Naive thymus-derived CD4-positive, alpha-beta T cell (primary cell): ENCODE measurements at regions of chr20 and their contacts with region 1.

Region 1: DNA sequence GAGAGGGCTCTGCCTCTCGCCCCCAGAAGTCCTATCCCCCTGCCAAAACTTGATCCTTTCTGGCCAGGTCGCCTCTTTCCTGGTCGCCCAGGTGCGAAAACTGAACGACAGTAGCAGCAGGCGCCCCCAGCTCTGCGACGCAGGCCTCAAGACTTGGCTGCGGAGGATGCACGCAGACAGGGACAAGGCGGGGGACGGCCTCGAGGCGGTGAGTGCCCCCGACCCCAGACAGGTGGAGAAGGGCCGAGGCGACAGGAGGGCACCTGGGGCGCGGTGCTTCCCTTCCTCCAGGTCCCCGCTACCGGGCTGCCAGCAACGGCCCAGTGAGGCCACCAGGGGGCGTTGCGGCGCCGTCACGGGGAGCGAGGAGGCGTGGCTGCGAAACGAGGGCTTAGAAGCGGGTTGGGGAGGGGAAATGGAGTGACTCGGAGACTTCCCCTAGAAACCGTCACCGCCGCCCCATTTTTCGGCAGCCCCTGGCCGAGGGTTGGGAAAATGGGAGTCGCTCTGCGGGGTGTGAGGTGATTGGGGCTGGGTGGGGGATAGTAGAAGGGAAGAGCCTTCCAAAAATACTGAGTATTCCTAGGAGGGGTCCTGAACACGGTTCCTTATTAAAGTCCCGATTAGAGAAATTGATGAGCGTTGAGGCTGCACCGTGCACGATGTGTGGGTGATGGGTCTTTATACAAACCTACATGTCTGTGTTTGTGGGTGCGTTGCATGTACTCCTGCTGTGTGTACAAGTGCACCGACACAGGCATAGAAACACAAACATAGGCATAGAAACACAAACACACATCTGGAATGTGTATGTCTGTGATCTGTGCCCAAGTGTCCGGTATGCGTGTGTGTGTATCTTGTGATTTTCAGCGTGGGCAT is 44.6 kb downstream of the ARHGAP40 start:
- DNase-seq: peak; percentile 80 to 97 (median 90)
- ATAC-seq: peak; percentile 99
- H3K4me3 ChIP-seq: peak overlapping the region; percentile 46
- H3K4me3 Mint-ChIP-seq: peak overlapping the region; percentile 74 to 91 (median 84)
- H3K27ac ChIP-seq: no peak overlapping the region
- H3K27ac Mint-ChIP-seq: peak overlapping the region in 3 of 9 donors; percentile 10 to 46 (median 31)
- H3K4me1 ChIP-seq: peaks cover 7 to 8% of the 10 kb centered on the region in 2 donors
- H3K4me1 Mint-ChIP-seq: peaks cover 0 to 8% (median 8%) of the 10 kb centered on the region in 7 donors
- H3K27me3 ChIP-seq: no peaks in the 10 kb centered on the region
- H3K27me3 Mint-ChIP-seq: peaks cover 24 to 49% (median 34%) of the 10 kb centered on the region in 5 donors

Region 2: DNA sequence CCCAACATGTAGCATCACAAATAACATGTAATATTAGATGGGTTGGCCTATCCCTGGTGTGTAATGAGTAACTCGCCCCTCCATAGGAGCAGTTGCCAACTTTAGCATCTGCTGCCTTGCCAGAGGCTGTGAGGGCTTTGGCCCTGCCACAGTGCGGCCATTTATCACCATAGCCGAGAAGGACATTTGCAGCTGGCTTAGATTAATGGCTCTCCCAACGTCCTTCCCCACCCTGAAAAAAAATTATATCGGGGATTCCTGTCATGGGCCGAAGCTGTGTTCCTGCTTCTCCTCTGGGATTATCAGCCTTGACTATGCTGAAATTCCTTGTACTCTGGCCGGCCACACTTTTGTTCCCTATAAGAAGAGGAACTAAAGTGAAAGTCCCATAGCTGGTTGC is 72.8 kb before region 1 on chr20:
- CTCF ChIA-PET with region 1: no interaction called
- POLR2A ChIA-PET with region 1: no interaction called
- intact Hi-C with region 1: no loop called
- DNase-seq: no peak
- ATAC-seq: no peak
- H3K4me3 ChIP-seq: no peak overlapping the region
- H3K4me3 Mint-ChIP-seq: no peak overlapping the region
- H3K27ac ChIP-seq: no peak overlapping the region
- H3K27ac Mint-ChIP-seq: no peak overlapping the region
- H3K4me1 ChIP-seq: no peaks in the 10 kb centered on the region
- H3K4me1 Mint-ChIP-seq: no peaks in the 10 kb centered on the region
- H3K27me3 ChIP-seq: no peaks in the 10 kb centered on the region
- H3K27me3 Mint-ChIP-seq: no peaks in the 10 kb centered on the region

Region 3: GRCh38 chr20:38658879-38659596 is 12.8 kb after region 1 on chr20:
- CTCF ChIA-PET with region 1: interaction called, 10 read pairs
- POLR2A ChIA-PET with region 1: no interaction called
- intact Hi-C with region 1: no loop called
- DNase-seq: peak in 3 of 9 donors; percentile 17 to 23 (median 22)
- ATAC-seq: peak; percentile 67
- H3K4me3 ChIP-seq: no peak overlapping the region
- H3K4me3 Mint-ChIP-seq: no peak overlapping the region
- H3K27ac ChIP-seq: no peak overlapping the region
- H3K27ac Mint-ChIP-seq: no peak overlapping the region
- H3K4me1 ChIP-seq: no peaks in the 10 kb centered on the region
- H3K4me1 Mint-ChIP-seq: no peaks in the 10 kb centered on the region
- H3K27me3 ChIP-seq: peaks cover 0 to 10% of the 10 kb centered on the region in 2 donors
- H3K27me3 Mint-ChIP-seq: peaks cover 32 to 52% (median 41%) of the 10 kb centered on the region in 5 donors

Region 4: DNA sequence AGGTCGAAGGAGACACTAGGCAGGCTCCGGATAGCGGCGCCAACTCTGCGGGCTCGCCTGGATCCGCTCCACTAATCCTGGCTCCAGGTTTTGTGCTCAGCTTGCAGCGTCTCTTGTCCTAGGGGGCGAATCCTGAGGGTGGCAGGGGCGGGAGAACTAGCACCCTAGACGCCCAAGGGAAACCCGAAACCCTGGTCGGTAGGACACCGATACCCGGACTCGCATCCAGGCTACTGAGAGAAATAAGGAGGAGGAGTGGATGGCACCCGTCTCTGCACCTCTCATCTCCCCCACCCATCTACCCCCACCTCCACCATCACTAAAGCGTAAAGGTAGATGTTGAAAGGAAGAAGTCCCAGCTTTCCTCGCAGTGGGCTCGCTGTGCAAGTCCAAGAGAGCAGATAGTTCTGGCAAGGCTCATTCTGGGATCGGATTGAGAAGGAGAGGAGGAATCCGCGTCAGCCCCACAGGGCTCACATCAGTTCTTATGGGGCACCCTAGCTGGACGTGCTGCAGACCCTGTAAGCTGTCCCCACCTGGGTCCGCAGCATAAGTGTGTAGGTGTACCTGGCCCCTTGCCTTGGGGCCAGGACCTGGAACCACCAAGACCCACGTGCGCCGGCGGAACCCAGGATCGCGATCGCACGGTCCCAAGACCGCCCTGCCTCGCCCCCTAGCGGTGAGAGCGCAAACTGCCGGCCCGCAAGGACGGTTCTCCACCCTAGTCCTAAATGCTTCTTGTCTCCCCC is 84.9 kb after region 1 on chr20:
- CTCF ChIA-PET with region 1: no interaction called
- POLR2A ChIA-PET with region 1: no interaction called
- intact Hi-C with region 1: loop called (anchors 1 to 5 kb)
- DNase-seq: peak; percentile 53 to 84 (median 70)
- ATAC-seq: peak; percentile 87
- H3K4me3 ChIP-seq: peak overlapping the region; percentile 63
- H3K4me3 Mint-ChIP-seq: peak overlapping the region; percentile 65 to 86 (median 77)
- H3K27ac ChIP-seq: no peak overlapping the region
- H3K27ac Mint-ChIP-seq: peak overlapping the region in 6 of 9 donors; percentile 6 to 80 (median 44)
- H3K4me1 ChIP-seq: peaks cover 24 to 32% of the 10 kb centered on the region in 2 donors
- H3K4me1 Mint-ChIP-seq: peaks cover 32 to 52% (median 44%) of the 10 kb centered on the region in 7 donors
- H3K27me3 ChIP-seq: peaks cover 39 to 41% of the 10 kb centered on the region in 2 donors
- H3K27me3 Mint-ChIP-seq: peaks cover 89 to 96% (median 92%) of the 10 kb centered on the region in 5 donors

Region 5: DNA sequence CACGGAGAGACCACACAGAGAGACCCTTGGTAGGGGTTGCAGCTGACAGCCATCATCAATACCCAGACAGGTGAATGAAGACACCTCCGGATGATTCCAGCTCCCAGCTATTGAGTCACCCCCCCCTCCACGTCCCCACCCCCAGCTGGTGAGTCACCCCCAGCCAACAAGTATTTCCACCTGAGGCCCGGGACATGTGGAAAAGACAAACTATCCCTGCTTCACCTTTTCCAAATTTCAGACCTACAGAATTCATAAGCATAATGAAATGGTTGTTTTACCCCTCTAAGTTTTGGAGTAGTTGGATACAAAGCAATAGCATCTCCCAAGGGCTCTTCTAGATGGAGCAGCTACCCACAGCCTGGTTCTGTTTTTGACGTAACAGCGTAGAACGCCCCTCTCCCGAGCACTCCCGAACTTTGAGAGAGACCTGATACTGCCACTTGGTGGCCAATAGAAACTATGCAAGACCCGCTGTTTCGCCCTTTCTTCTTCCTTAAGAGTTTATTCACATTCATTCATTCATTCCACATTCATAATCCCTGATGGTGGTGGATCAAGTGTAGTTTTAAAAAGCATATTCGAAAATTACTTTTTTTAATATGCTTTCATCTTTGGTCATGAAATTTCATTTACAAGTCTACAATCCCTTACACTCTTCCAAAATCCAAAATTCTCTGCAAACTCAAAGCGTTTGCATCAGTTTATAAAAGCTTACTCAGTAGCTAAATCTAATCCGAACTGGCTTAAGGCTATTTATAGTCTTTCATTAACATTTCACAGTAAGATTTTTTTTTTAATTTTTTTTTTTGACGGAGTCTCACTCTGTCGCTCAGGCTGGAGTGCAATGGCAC is 144.2 kb after region 1 on chr20:
- CTCF ChIA-PET with region 1: no interaction called
- POLR2A ChIA-PET with region 1: no interaction called
- intact Hi-C with region 1: loop called in 1 of 2 experiments (anchors 1 kb)
- DNase-seq: peak in 4 of 9 donors; percentile 20 to 63 (median 40)
- ATAC-seq: peak; percentile 60
- H3K4me3 ChIP-seq: no peak overlapping the region
- H3K4me3 Mint-ChIP-seq: peak overlapping the region in 5 of 10 donors; percentile 5 to 37 (median 15)
- H3K27ac ChIP-seq: no peak overlapping the region
- H3K27ac Mint-ChIP-seq: peak overlapping the region in 6 of 9 donors; percentile 2 to 90 (median 64)
- H3K4me1 ChIP-seq: peaks cover 0 to 4% of the 10 kb centered on the region in 2 donors
- H3K4me1 Mint-ChIP-seq: peaks cover 0 to 15% (median 9%) of the 10 kb centered on the region in 7 donors
- H3K27me3 ChIP-seq: no peaks in the 10 kb centered on the region
- H3K27me3 Mint-ChIP-seq: no peaks in the 10 kb centered on the region

Region 6: DNA sequence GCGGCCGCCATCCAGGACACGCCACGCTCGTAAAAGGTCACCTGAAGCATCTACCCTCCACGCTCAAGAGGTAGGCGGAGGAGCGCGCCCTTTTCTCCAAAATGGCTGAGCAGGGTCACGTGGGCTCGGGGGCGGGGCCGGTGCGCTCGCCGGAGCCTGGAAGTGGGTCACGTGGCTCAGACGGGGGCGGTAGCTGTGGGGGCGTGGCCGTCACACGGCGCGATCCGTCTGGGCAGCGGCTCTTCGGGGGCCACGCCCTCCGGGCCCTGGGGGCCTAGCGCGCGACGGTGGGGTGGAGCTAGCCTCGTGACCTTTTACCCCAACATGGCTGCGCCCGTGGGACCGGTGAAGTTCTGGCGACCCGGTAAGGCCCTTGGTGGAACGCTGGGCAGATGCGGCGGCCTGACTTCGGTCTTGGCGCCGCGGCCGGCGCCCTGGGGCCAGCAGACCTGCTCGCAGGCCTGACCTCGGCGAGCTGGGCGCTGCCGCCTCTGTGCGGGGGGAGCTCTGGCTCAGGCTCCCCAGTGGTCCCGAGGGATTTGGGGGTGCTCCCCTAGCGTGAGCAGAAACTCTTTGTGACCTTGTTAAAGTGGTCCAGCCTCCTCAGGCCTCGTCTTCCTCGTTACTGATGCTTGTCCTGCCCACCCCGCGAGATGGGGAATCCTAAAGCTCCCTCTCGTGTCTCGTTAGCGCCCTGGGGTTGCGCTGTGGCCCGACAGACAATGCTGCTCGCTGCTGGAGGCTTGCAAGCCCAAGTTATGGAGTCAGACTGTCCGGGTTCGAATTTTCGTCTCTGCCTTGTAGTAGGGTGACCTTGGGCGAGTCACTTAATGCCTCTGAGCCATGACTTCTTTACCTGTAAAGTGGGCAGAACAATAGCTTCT is 316.1 kb after region 1 on chr20 and contains the start of gene DHX35:
- CTCF ChIA-PET with region 1: no interaction called
- POLR2A ChIA-PET with region 1: interaction called, 7 read pairs
- intact Hi-C with region 1: loop called (anchors 1 kb)
- DNase-seq: peak; percentile 96 to 99 (median 98)
- ATAC-seq: peak; percentile 100
- H3K4me3 ChIP-seq: peak within 1 kb of the TSS; percentile 97
- H3K4me3 Mint-ChIP-seq: peak within 1 kb of the TSS; percentile 92 to 97 (median 96)
- H3K27ac ChIP-seq: peak within 1 kb of the TSS; percentile 80
- H3K27ac Mint-ChIP-seq: peak within 1 kb of the TSS; percentile 92 to 98 (median 96)
- H3K4me1 ChIP-seq: peaks cover 6 to 16% of the 10 kb centered on the region in 2 donors
- H3K4me1 Mint-ChIP-seq: peaks cover 16 to 46% (median 34%) of the 10 kb centered on the region in 7 donors
- H3K27me3 ChIP-seq: no peaks in the 10 kb centered on the region
- H3K27me3 Mint-ChIP-seq: no peaks in the 10 kb centered on the region
- total RNA-seq, gene DHX35: 8.0 to 13.3 (median 10.6) TPM